MCF 10A (cell line): ENCODE measurements at regions of chrX and their contacts with region 1.

Region 1: DNA sequence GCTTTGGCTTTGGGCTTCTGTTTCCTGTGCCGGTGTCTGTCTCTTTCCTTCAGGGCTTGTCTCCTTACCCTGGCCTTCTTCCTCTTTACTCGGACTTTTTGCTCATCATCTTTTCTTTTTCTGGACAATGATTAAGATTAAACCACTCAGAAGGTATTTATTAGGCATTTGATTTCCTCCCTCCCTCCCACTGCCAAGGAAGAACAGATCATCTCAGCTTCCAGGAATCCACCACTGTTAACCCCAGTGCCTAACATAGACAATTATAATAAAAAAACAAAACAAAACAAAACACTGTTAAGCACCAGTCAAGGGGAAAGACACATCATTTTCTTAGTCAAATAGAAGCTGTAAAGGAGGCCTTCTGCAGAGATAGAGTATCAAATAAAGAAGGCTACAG is 16.6 kb downstream of the PGRMC1 start:
- DNase-seq: no peak
- H3K4me3 Mint-ChIP-seq: no peak overlapping the region
- H3K27ac Mint-ChIP-seq: no peak overlapping the region
- H3K4me1 Mint-ChIP-seq: no peaks in the 10 kb centered on the region
- H3K27me3 Mint-ChIP-seq: peaks cover 35% of the 10 kb centered on the region
- CTCF ChIP-seq: no peak

Region 2: GRCh38 chrX:119266364-119266995 is 13.8 kb after region 1 on chrX:
- CTCF ChIA-PET with region 1: interaction called, 22 read pairs
- POLR2A ChIA-PET with region 1: no interaction called
- intact Hi-C with region 1: no loop called
- DNase-seq: peak; percentile 37
- H3K4me3 Mint-ChIP-seq: no peak overlapping the region
- H3K27ac Mint-ChIP-seq: no peak overlapping the region
- H3K4me1 Mint-ChIP-seq: no peaks in the 10 kb centered on the region
- H3K27me3 Mint-ChIP-seq: peaks cover 58% of the 10 kb centered on the region
- CTCF ChIP-seq: peak; percentile 49

Region 3: GRCh38 chrX:119374736-119375135 is 122.0 kb after region 1 on chrX:
- CTCF ChIA-PET with region 1: no interaction called
- POLR2A ChIA-PET with region 1: no interaction called
- intact Hi-C with region 1: no loop called
- DNase-seq: peak; percentile 48
- H3K4me3 Mint-ChIP-seq: no peak overlapping the region
- H3K27ac Mint-ChIP-seq: no peak overlapping the region
- H3K4me1 Mint-ChIP-seq: peaks cover 18% of the 10 kb centered on the region
- H3K27me3 Mint-ChIP-seq: peaks cover 4% of the 10 kb centered on the region
- CTCF ChIP-seq: no peak